HCT116 (cell line): ENCODE measurements at regions of chr4 and their contacts with region 1.

Region 1: GRCh38 chr4:17468371-17469221 is 43.3 kb downstream of the QDPR start:
- DNase-seq: peak; percentile 12
- ATAC-seq: no peak
- H3K4me3 ChIP-seq: no peak overlapping the region
- H3K27ac ChIP-seq: no peak overlapping the region
- H3K4me1 ChIP-seq: peaks cover 0 to 3% of the 10 kb centered on the region in 2 experiments; a peak in 2 of 4 replicates
- H3K27me3 ChIP-seq: no peaks in the 10 kb centered on the region
- CTCF ChIP-seq: peak; percentile 25 to 44 (median 29); a peak in 4 of 6 replicates
- POLR2A ChIP-seq: no peak
- RAD21 ChIP-seq: peak; percentile 45

Region 2: GRCh38 chr4:16289897-16290554 is 1178.6 kb before region 1 on chr4:
- CTCF ChIA-PET with region 1: no interaction called
- POLR2A ChIA-PET with region 1: no interaction called
- RAD21 ChIA-PET with region 1: no interaction called
- intact Hi-C with region 1: loop called (anchors 5 kb)
- DNase-seq: peak; percentile 7
- ATAC-seq: peak; percentile 62; the same call in 1 of the 2 replicates
- H3K4me3 ChIP-seq: no peak overlapping the region
- H3K27ac ChIP-seq: no peak overlapping the region
- H3K4me1 ChIP-seq: no peaks in the 10 kb centered on the region
- H3K27me3 ChIP-seq: peaks cover 17% of the 10 kb centered on the region
- CTCF ChIP-seq: peak; percentile 32 to 70 (median 59); a peak in 4 of 6 replicates
- POLR2A ChIP-seq: no peak
- RAD21 ChIP-seq: peak; percentile 74

Region 3: DNA sequence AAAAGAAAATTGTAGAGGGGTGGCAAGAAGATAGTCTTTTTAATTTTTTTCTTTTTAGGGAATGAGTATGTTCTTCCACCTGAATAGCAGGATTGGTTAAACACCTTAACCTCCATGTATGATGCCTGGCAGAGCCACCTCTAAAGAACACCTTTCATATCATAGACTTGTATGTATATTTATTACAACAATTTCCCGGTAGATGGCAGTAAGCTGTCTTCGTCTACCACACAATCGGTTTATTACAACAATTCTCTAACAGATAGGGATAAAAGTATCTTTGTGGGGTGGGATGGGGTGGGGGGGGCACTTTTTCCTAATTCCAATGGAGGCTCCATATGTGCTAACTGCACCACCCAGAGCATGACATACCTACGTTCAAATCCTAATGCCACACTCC is 825.7 kb before region 1 on chr4:
- CTCF ChIA-PET with region 1: no interaction called
- POLR2A ChIA-PET with region 1: no interaction called
- RAD21 ChIA-PET with region 1: interaction called in 1 of 2 experiments, 3 read pairs
- intact Hi-C with region 1: loop called (anchors 10 kb)
- DNase-seq: no peak
- ATAC-seq: 0 out of 2 replicates have a peak, but pooled peaks have one; percentile 62
- H3K4me3 ChIP-seq: no peak overlapping the region
- H3K27ac ChIP-seq: no peak overlapping the region
- H3K4me1 ChIP-seq: no peaks in the 10 kb centered on the region
- H3K27me3 ChIP-seq: peaks cover 3% of the 10 kb centered on the region; the same call in 1 of the 2 replicates
- CTCF ChIP-seq: no peak
- POLR2A ChIP-seq: no peak
- RAD21 ChIP-seq: peak; percentile 11; the same call in 1 of the 2 replicates

Region 4: GRCh38 chr4:17347445-17347844 is 121.2 kb before region 1 on chr4:
- CTCF ChIA-PET with region 1: interaction called, 28 read pairs
- POLR2A ChIA-PET with region 1: interaction called, 3 read pairs
- RAD21 ChIA-PET with region 1: interaction called in 1 of 2 experiments, 3 read pairs
- intact Hi-C with region 1: loop called (anchors 1 kb)
- DNase-seq: peak; percentile 16
- ATAC-seq: peak; percentile 87
- H3K4me3 ChIP-seq: no peak overlapping the region
- H3K27ac ChIP-seq: no peak overlapping the region
- H3K4me1 ChIP-seq: no peaks in the 10 kb centered on the region
- H3K27me3 ChIP-seq: no peaks in the 10 kb centered on the region
- CTCF ChIP-seq: peak; percentile 65 to 75 (median 68); a peak in 5 of 6 replicates
- POLR2A ChIP-seq: no peak
- RAD21 ChIP-seq: peak; percentile 77

Region 5: GRCh38 chr4:17562160-17562559 is 93.6 kb after region 1 on chr4:
- CTCF ChIA-PET with region 1: no interaction called
- POLR2A ChIA-PET with region 1: no interaction called
- RAD21 ChIA-PET with region 1: no interaction called
- intact Hi-C with region 1: no loop called
- DNase-seq: no peak
- ATAC-seq: peak; percentile 89
- H3K4me3 ChIP-seq: no peak overlapping the region
- H3K27ac ChIP-seq: no peak overlapping the region
- H3K4me1 ChIP-seq: peaks cover 0 to 7% of the 10 kb centered on the region in 2 experiments; a peak in 2 of 4 replicates
- H3K27me3 ChIP-seq: no peaks in the 10 kb centered on the region
- CTCF ChIP-seq: peak in 2 of 3 experiments; percentile 45; a peak in 4 of 6 replicates
- POLR2A ChIP-seq: no peak
- RAD21 ChIP-seq: peak; percentile 34; the same call in 1 of the 2 replicates